ENCODE measurements at regions of chr2 and their contacts with region 1.

Region 1: GRCh38 chr2:234544659-234545611 is 48.1 kb upstream of the ARL4C start:
- DNase-seq: peak; percentile 78
- H3K4me3 ChIP-seq: no peak overlapping the region
- H3K27ac ChIP-seq: no peak overlapping the region
- H3K4me1 ChIP-seq: no peaks in the 10 kb centered on the region
- H3K27me3 ChIP-seq: no peaks in the 10 kb centered on the region
- CTCF ChIP-seq: peak; percentile 87

Region 2: DNA sequence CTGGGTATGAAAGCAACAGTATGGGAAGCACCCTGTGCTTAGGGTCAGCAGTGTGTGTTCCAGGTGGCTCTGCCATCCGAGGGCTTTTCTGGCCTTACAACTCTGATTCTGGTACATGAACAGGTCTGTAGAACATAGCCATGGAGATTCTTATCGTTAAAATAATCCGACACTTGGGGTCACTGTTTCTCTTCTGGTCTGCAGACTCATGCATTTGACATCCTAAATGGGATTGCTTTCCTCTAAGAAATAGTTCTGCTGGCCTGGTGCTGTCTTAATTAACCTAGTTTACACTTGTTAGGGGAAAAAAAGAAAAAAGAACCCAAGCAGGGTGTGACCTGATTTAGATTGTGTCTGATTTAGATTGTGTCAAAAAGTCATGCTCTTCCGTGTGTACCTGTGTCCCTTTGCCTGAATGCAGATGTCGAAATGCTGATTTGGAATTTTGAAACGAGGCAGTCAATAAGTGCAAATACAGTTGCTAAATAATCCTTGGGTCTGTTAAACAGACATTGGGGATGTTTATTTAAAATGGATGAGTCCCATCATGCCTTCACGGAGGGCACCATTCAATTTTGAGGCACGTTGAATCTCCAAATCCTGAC is 568.1 kb before region 1 on chr2:
- CTCF ChIA-PET with region 1: no interaction called
- POLR2A ChIA-PET with region 1: no interaction called
- intact Hi-C with region 1: loop called (anchors 1 kb)
- DNase-seq: peak; percentile 67
- H3K4me3 ChIP-seq: no peak overlapping the region
- H3K27ac ChIP-seq: no peak overlapping the region
- H3K4me1 ChIP-seq: no peaks in the 10 kb centered on the region
- H3K27me3 ChIP-seq: no peaks in the 10 kb centered on the region
- CTCF ChIP-seq: peak; percentile 56

Region 3: DNA sequence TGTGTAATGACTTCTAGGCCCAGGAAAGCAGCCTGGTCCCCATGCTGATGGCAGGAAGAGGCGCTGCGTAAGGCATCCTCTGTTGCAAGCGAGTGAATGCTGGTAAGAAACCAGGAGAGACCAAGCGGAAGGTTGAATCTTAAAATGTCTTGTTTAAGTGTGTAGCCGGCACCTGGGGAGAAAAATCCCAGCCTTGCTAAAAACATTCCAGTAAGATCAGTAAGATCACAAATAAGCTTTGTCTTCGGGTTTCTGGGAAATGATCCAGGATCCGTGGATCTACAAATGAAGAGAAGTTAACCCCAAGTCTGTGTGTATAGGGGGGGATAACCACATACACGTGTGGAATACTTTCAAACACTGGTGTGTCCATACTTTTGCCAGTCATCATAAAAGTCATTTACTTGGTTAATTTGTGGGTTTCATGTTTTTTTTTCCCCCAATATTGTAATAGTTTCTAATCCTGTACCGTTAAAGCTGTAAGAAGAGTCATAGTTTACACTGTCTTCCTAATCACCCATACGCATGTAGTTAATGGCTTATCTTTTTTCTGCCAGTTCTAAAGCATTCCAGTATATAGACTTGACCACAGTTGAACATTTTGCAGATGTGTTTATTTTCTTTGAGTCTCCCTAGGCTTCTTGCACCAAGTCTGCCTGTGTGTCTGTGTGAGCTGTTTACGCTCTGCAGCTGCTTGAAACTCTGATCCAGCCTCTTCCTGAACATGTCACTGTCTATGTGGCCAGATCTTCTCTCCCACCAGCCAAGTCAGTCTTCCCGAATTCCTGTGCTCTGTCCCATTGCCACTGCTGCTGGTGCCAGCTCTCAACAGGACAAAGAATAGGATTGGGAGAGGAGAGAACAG is 87.8 kb after region 1 on chr2:
- CTCF ChIA-PET with region 1: no interaction called
- POLR2A ChIA-PET with region 1: no interaction called
- intact Hi-C with region 1: no loop called
- DNase-seq: no peak
- H3K4me3 ChIP-seq: no peak overlapping the region
- H3K27ac ChIP-seq: no peak overlapping the region
- H3K4me1 ChIP-seq: no peaks in the 10 kb centered on the region
- H3K27me3 ChIP-seq: no peaks in the 10 kb centered on the region
- CTCF ChIP-seq: no peak

Measured in A673 (cell line).